Cardiac septum (tissue), 1 donor: ENCODE measurements at regions of chr1 and their contacts with region 1.

Region 1: GRCh38 chr1:165630629-165631341 is at the start of gene MGST3:
- DNase-seq: peak; percentile 95
- total RNA-seq, gene MGST3: 998 TPM

Region 2: GRCh38 chr1:165116732-165117131 is 514.1 kb before region 1 on chr1:
- intact Hi-C with region 1: no loop called
- DNase-seq: no peak

Region 3: DNA sequence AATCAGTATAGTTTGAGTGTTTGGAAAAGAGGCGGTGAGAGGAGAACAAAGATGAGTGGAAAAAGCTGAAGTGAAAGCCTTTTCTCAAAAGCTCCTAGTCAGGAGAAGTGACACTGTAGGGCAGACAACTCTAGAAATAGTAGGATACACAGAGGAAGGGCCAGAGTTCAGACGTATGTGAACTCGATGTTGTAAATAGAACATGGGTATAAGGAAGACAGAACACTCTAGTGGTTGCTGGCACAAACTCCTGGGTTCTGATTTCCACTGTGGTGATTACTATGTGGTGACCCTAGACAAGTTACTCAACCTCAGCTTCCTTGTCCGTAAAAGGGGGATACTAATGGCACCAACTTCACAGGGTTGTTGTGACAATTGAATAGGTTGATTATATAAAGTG is 30.0 kb before region 1 on chr1:
- intact Hi-C with region 1: loop called (anchors 2 kb)
- DNase-seq: no peak

Region 4: DNA sequence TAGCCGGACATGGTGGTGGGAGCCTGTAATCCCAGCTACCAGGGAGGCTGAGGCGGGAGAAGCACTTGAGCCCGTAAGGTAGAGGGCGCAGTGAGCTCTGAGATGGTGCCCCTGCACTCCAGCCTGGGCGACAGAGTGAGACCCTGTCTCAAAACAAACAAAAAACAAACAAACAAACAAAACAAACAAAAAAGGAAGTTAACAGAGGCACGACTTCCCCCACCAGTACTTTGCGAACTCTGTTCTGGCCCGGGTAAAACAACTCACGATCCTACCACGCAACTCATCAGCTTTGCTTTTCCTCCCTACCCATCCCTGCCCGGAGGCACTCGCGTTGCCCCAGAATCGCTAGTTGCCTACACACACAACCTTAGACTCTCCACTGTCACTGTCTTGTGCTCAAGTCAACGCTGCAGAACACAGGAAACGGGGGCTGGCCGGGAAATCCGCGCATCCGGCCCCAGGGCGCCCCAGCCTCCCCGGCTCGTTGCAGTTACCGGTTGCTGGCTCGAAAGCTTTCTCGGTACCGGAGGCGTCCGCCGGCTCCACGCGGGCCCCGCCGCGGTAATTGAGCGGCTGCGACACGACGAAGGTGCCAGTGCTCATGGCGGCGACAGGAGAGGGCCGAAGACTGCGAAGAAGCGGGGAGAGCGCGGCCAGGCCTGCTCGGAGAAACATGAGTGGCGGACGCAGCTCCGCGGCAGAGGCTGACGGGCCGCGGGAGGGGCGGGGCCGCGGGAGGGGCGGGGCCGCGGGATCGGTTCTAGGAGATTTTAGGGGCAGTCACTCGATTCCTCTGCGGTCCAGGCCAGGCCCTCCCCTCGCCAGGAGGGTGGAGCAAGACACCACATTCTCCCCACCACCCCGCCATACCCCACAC is 67.3 kb after region 1 on chr1 and contains the start of gene ALDH9A1:
- intact Hi-C with region 1: loop called (anchors 2 kb)
- DNase-seq: peak; percentile 96
- total RNA-seq, gene ALDH9A1: 61.3 TPM

Region 5: GRCh38 chr1:165827268-165828102 is 196.7 kb after region 1 on chr1 and contains the start of gene UCK2:
- intact Hi-C with region 1: loop called (anchors 2 kb)
- DNase-seq: peak; percentile 91
- total RNA-seq, gene UCK2: 32.0 TPM

Region 6: GRCh38 chr1:165898837-165899236 is 268.1 kb after region 1 on chr1:
- intact Hi-C with region 1: loop called (anchors 10 kb)
- DNase-seq: no peak